Naive thymus-derived CD4-positive, alpha-beta T cell (primary cell): ENCODE measurements at regions of chr2 and their contacts with region 1.

Region 1: GRCh38 chr2:176852667-176853066 is 359.9 kb upstream of the HNRNPA3 start:
- DNase-seq: peak in 7 of 9 donors; percentile 21 to 56 (median 54)
- ATAC-seq: peak; percentile 91
- H3K4me3 ChIP-seq: no peak overlapping the region
- H3K4me3 Mint-ChIP-seq: peak overlapping the region in 9 of 10 donors; percentile 18 to 61 (median 47)
- H3K27ac ChIP-seq: no peak overlapping the region
- H3K27ac Mint-ChIP-seq: peak overlapping the region in 8 of 9 donors; percentile 2 to 76 (median 27)
- H3K4me1 ChIP-seq: peaks cover 24 to 53% of the 10 kb centered on the region in 2 donors
- H3K4me1 Mint-ChIP-seq: peaks cover 18 to 61% (median 44%) of the 10 kb centered on the region in 7 donors
- H3K27me3 ChIP-seq: no peaks in the 10 kb centered on the region
- H3K27me3 Mint-ChIP-seq: peaks cover 0 to 2% (median 0%) of the 10 kb centered on the region in 5 donors

Region 2: DNA sequence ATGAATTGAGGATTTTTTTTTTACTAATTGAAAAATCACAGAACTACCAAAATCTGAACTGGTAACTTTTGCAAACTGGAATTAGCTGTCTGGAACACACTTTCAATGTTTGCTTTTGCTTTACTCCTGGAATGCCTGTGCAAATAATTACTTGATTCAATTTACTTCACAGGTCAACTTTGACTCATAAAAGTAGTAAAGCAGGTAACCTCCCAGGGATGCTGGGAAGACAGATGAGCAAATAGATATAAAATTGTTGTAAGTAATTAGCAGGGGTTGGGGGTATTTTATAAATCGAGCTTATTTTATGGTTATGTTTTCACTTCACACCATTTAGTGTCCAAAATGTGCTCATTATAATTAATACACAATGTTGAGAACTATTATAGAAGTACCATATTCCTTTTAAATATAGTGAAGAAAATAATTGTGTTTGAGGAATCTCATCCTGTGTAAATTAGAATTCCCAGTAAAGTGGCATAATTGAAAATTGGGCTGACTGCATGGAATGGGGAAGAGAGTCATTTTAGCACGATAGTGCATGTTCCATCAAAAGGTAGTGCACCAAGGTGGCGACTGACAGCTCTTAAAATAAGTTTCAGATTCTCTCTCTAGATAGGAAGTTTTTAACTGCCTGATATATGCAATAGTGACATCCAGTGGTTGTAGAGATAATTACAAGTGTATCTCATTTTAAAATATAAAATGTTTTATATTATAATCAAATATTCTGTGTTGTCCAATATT is 38.2 kb before region 1 on chr2:
- CTCF ChIA-PET with region 1: no interaction called
- POLR2A ChIA-PET with region 1: no interaction called
- intact Hi-C with region 1: loop called in 1 of 2 experiments (anchors 1 kb)
- DNase-seq: peak in 5 of 9 donors; percentile 34 to 47 (median 44)
- ATAC-seq: peak; percentile 80
- H3K4me3 ChIP-seq: no peak overlapping the region
- H3K4me3 Mint-ChIP-seq: peak overlapping the region in 7 of 10 donors; percentile 7 to 62 (median 24)
- H3K27ac ChIP-seq: no peak overlapping the region
- H3K27ac Mint-ChIP-seq: no peak overlapping the region
- H3K4me1 ChIP-seq: peaks cover 3 to 7% of the 10 kb centered on the region in 2 donors
- H3K4me1 Mint-ChIP-seq: peaks cover 10 to 26% (median 19%) of the 10 kb centered on the region in 7 donors
- H3K27me3 ChIP-seq: no peaks in the 10 kb centered on the region
- H3K27me3 Mint-ChIP-seq: peaks cover 0 to 7% (median 0%) of the 10 kb centered on the region in 5 donors

Region 3: GRCh38 chr2:176826984-176827668 is 25.5 kb before region 1 on chr2:
- CTCF ChIA-PET with region 1: no interaction called
- POLR2A ChIA-PET with region 1: no interaction called
- intact Hi-C with region 1: loop called in 1 of 2 experiments (anchors 2 kb)
- DNase-seq: peak in 1 of 9 donors; percentile 31
- ATAC-seq: no peak
- H3K4me3 ChIP-seq: peak overlapping the region; percentile 4
- H3K4me3 Mint-ChIP-seq: peak overlapping the region in 9 of 10 donors; percentile 23 to 66 (median 53)
- H3K27ac ChIP-seq: peak overlapping the region; percentile 43
- H3K27ac Mint-ChIP-seq: peak overlapping the region; percentile 64 to 91 (median 87)
- H3K4me1 ChIP-seq: peaks cover 9 to 35% of the 10 kb centered on the region in 2 donors
- H3K4me1 Mint-ChIP-seq: peaks cover 25 to 79% (median 53%) of the 10 kb centered on the region in 7 donors
- H3K27me3 ChIP-seq: no peaks in the 10 kb centered on the region
- H3K27me3 Mint-ChIP-seq: peaks cover 0 to 11% (median 1%) of the 10 kb centered on the region in 5 donors

Region 4: DNA sequence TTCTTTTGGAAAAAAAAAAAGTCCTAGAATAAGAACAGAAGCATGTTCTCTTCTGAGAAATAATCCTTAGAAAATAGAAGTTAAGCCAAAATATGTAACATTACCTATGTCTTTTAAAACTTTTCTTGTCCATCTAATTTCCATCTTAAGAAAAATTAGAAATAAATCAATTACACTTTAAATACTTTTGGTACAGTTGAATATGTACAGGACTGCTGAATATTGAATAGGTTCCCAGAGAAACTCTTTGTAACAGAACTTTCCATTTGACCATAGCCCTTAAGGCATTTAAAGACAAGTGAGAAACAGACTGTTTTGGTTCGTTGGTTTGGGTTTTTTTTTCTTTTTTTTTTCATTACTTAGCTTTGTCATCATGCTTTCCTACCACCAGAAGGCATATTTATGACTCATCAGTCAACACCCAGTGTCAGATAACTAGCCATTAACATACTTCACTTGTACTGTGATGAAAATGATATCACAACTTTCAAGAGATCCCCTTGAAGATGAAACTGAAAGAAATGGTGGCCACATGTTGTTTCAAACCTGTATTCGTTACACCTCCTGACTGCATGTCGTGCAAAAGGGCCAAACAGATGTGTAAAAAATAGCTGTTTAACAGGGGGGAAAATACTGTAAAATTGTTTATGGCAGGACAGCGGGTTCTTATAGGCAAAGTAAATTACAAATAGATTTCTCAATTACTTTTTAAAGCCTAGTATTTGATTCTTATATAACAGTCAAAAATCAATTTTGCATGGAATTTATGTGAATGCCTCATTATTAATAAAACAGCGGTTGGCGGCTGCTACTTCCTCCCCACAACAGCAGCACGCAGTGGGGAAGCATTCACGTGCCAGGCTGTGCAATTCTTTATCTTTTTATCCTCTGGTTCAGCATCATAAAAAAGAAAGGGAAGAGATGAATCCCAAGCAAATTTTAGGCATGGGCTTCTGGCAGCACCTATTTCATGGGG is 79.2 kb after region 1 on chr2:
- CTCF ChIA-PET with region 1: no interaction called
- POLR2A ChIA-PET with region 1: no interaction called
- intact Hi-C with region 1: loop called in 1 of 2 experiments (anchors 5 kb)
- DNase-seq: no peak
- ATAC-seq: peak; percentile 89
- H3K4me3 ChIP-seq: no peak overlapping the region
- H3K4me3 Mint-ChIP-seq: peak overlapping the region in 2 of 10 donors; percentile 39 to 69
- H3K27ac ChIP-seq: no peak overlapping the region
- H3K27ac Mint-ChIP-seq: peak overlapping the region in 2 of 9 donors; percentile 11 to 90
- H3K4me1 ChIP-seq: peaks cover 0 to 7% of the 10 kb centered on the region in 2 donors
- H3K4me1 Mint-ChIP-seq: peaks cover 6 to 20% (median 8%) of the 10 kb centered on the region in 7 donors
- H3K27me3 ChIP-seq: no peaks in the 10 kb centered on the region
- H3K27me3 Mint-ChIP-seq: peaks cover 0 to 1% (median 0%) of the 10 kb centered on the region in 5 donors

Region 5: GRCh38 chr2:177010861-177011260 is 158.2 kb after region 1 on chr2:
- CTCF ChIA-PET with region 1: no interaction called
- POLR2A ChIA-PET with region 1: no interaction called
- intact Hi-C with region 1: loop called in 1 of 2 experiments (anchors 5 kb)
- DNase-seq: no peak
- ATAC-seq: no peak
- H3K4me3 ChIP-seq: no peak overlapping the region
- H3K4me3 Mint-ChIP-seq: no peak overlapping the region
- H3K27ac ChIP-seq: no peak overlapping the region
- H3K27ac Mint-ChIP-seq: no peak overlapping the region
- H3K4me1 ChIP-seq: no peaks in the 10 kb centered on the region
- H3K4me1 Mint-ChIP-seq: peaks cover 0 to 5% (median 3%) of the 10 kb centered on the region in 7 donors
- H3K27me3 ChIP-seq: no peaks in the 10 kb centered on the region
- H3K27me3 Mint-ChIP-seq: peaks cover 15 to 34% (median 26%) of the 10 kb centered on the region in 5 donors

Region 6: DNA sequence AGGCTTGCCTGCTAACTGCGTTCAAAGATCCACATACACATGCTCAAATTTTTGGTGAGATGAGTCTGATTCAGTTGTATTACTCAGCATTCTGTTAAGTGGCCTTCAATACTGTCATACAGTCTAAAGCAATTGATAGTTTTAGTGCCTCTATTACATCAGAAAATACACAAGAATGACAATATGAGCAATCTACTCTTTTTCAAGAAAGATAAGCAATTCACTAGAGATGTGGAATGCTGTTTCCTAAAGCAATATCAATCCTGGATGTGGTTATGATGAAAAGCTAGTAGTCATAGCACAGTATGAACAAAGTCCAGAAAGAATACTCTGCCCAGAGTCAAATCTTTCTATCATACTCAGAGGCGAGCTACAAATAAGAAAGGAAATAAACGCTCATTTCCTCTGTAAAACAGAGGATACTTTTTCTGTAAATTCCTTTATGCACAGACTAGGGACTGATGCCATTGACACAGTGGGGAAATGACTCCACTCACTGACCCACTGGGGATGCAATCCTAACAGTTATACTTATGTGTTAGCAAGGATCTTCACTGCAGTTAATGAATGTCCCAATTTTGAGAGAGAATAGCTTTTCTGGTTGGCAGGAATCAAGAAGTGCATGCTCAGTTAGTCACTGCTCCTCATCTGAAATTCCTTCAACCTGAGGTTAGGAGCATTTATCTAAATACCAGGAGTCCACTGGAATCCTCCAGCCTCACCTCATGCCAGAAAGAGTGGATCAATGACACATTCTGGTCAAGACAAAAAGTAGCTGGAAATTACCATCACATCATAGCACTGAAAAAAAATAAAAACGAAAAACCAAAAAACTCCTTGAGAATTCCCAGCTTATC is 1136.6 kb after region 1 on chr2:
- CTCF ChIA-PET with region 1: no interaction called
- POLR2A ChIA-PET with region 1: no interaction called
- intact Hi-C with region 1: no loop called
- DNase-seq: no peak
- ATAC-seq: no peak
- H3K4me3 ChIP-seq: no peak overlapping the region
- H3K4me3 Mint-ChIP-seq: no peak overlapping the region
- H3K27ac ChIP-seq: no peak overlapping the region
- H3K27ac Mint-ChIP-seq: no peak overlapping the region
- H3K4me1 ChIP-seq: no peaks in the 10 kb centered on the region
- H3K4me1 Mint-ChIP-seq: no peaks in the 10 kb centered on the region
- H3K27me3 ChIP-seq: no peaks in the 10 kb centered on the region
- H3K27me3 Mint-ChIP-seq: peaks cover 0 to 21% (median 5%) of the 10 kb centered on the region in 5 donors